K562 (cell line): ENCODE measurements at regions of chr2 and their contacts with region 1.

Region 1: GRCh38 chr2:101205521-101205998 is 47.1 kb upstream of the CNOT11 start:
- DNase-seq: peak in 2 of 4 experiments; percentile 30 to 57
- ATAC-seq: peak; percentile 83
- H3K4me3 ChIP-seq: no peak overlapping the region
- H3K27ac ChIP-seq: no peak overlapping the region
- H3K4me1 ChIP-seq: peaks cover 11 to 15% of the 10 kb centered on the region in 2 experiments
- H3K27me3 ChIP-seq: no peaks in the 10 kb centered on the region
- CTCF ChIP-seq: peak; percentile 43 to 63 (median 46); a peak in 5 of 6 replicates
- EP300 ChIP-seq: no peak
- POLR2A ChIP-seq: no peak
- RAD21 ChIP-seq: peak; percentile 60 to 62

Region 2: GRCh38 chr2:100957996-100958653 is 247.4 kb before region 1 on chr2:
- CTCF ChIA-PET with region 1: no interaction called
- POLR2A ChIA-PET with region 1: no interaction called
- in situ Hi-C with region 1: no loop called
- intact Hi-C with region 1: no loop called
- DNase-seq: no peak
- ATAC-seq: peak; percentile 56
- H3K4me3 ChIP-seq: no peak overlapping the region
- H3K27ac ChIP-seq: no peak overlapping the region
- H3K4me1 ChIP-seq: no peaks in the 10 kb centered on the region
- H3K27me3 ChIP-seq: peaks cover 29 to 61% of the 10 kb centered on the region in 2 experiments
- CTCF ChIP-seq: no peak
- EP300 ChIP-seq: no peak
- POLR2A ChIP-seq: no peak
- RAD21 ChIP-seq: no peak

Region 3: DNA sequence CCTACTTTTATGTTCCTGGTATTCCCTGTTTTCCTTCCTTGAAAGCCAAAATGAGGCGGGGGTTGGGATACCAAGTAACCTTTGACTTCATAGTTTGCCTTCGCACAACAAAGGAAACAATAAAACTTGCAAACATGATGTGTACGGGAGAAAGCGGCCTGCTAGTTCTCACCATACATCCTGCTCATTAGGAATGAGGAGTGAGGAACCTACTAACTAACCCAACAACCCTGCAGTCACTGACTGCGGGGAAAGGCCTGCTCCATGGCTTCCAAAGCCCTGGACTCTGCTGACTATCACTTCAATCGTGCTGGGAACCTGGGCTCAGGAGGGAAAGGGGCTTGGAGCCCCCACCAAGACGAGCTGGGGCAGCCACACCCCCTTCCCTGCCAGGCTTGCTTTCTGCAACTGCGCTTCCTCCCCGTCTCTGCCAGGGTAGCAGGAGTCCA is 179.3 kb before region 1 on chr2:
- CTCF ChIA-PET with region 1: no interaction called
- POLR2A ChIA-PET with region 1: no interaction called
- in situ Hi-C with region 1: loop called (anchors 5 kb)
- intact Hi-C with region 1: no loop called
- DNase-seq: no peak
- ATAC-seq: no peak
- H3K4me3 ChIP-seq: no peak overlapping the region
- H3K27ac ChIP-seq: no peak overlapping the region
- H3K4me1 ChIP-seq: no peaks in the 10 kb centered on the region; a peak in 2 of 5 replicates
- H3K27me3 ChIP-seq: peaks cover 3 to 12% of the 10 kb centered on the region in 2 experiments; a peak in 2 of 5 replicates
- CTCF ChIP-seq: no peak
- EP300 ChIP-seq: no peak
- POLR2A ChIP-seq: no peak
- RAD21 ChIP-seq: no peak

Region 4: DNA sequence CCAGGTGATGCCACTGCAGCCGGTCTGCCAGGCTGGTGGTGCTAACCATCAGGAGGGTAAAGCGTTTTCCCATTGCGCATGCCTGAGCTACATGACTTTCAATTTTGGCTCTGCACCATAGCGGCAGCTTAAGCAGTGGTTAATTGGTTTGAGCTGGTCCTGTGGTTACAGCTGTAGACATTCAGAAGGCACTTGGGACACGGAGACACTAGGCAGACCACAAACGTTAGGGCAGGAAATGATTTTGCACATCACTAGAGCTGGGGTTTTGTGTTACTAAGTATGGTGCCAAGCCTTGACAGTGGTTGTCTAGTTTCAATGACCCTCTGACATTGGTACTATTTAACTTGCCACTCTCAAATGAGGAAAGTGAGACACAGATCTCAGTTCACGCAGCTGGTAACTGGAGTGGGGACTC is 18.3 kb after region 1 on chr2:
- CTCF ChIA-PET with region 1: no interaction called
- POLR2A ChIA-PET with region 1: no interaction called
- in situ Hi-C with region 1: no loop called
- intact Hi-C with region 1: no loop called
- DNase-seq: no peak
- ATAC-seq: peak; percentile 27; the same call in 2 of the 3 replicates
- H3K4me3 ChIP-seq: no peak overlapping the region
- H3K27ac ChIP-seq: no peak overlapping the region; the same call in 2 of the 3 replicates
- H3K4me1 ChIP-seq: peaks cover 5 to 9% of the 10 kb centered on the region in 2 experiments; a peak in 3 of 5 replicates
- H3K27me3 ChIP-seq: no peaks in the 10 kb centered on the region
- CTCF ChIP-seq: no peak
- EP300 ChIP-seq: no peak
- POLR2A ChIP-seq: no peak
- RAD21 ChIP-seq: no peak

Region 5: DNA sequence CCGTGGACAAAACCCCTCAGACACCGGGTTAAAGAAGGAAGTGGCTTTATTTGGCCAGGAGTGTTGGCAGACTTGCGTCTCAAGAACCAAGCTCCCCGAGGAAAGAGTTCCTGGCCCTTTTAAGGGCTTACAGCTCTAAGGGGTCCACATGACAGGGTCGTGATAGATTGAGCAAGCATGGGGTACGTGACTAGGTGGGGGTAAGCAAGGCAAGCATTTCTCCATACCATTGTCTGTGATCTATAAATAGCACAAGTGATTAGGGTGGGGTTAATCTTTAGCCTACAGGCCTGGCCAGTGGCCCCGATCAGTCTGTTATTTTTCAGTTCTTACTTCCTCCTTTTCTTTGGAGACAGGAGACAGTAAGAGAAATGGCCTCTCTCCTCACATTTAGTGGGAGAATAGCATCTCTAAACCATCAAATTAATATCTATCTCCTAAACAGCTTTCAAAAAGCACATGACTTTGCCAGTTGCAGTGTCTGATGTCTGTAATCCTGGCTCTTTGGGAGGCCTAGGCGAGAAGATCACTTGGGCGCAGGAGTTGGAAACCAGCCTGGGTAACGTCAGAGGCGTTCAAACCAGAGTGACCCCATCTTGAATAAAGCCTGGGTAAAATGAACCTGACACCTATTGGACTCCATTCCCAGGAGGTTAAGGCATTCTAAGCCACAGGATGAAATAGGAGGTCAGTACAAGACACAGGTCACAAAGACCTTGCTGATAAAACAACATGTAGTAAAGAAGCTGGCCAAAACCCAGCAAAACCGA is 28.8 kb after region 1 on chr2:
- CTCF ChIA-PET with region 1: no interaction called
- POLR2A ChIA-PET with region 1: no interaction called
- in situ Hi-C with region 1: no loop called
- intact Hi-C with region 1: no loop called
- DNase-seq: no peak
- ATAC-seq: no peak
- H3K4me3 ChIP-seq: no peak overlapping the region
- H3K27ac ChIP-seq: peak overlapping the region; percentile 31; the same call in 1 of the 3 replicates
- H3K4me1 ChIP-seq: peaks cover 0 to 16% of the 10 kb centered on the region in 2 experiments; a peak in 2 of 5 replicates
- H3K27me3 ChIP-seq: no peaks in the 10 kb centered on the region
- CTCF ChIP-seq: no peak
- EP300 ChIP-seq: no peak
- POLR2A ChIP-seq: no peak
- RAD21 ChIP-seq: no peak